Activated CD4-positive, alpha-beta memory T cell treated with anti-CD3 and anti-CD28 coated beads for 36 hours (primary cell): ENCODE measurements at regions of chr7 and their contacts with region 1.

Region 1: DNA sequence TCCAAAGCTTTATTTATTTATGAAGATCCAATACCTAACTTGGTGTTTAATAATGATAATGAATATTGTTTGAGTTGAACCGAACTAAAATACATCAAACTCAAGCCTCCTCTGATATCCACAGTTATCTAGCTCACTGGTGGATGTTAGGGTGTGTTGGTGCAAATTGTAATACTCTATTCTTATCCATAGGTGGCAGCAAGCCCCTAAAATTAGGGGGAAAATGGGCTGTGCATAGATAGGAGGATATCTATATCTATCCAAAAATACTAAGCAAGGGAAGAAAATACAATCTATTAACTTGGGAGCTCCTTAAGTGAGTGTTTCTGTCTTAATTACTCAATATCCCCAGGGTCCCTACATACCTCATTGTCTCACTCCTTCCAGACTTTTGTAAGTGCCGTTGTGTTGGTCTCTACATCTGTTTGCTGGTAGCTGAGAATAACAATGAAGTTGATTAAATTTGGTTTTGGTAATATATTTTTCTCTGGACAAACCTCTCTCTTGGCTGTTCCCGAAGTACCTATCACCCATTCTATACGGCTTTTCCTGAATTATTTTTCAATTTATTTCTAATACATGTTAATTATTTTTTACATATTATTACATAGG is 55.0 kb upstream of the VWDE start:
- DNase-seq: no peak
- H3K4me3 Mint-ChIP-seq: no peak overlapping the region
- H3K27ac Mint-ChIP-seq: no peak overlapping the region
- H3K4me1 Mint-ChIP-seq: no peaks in the 10 kb centered on the region
- H3K27me3 Mint-ChIP-seq: peaks cover 2% of the 10 kb centered on the region

Region 2: GRCh38 chr7:12031638-12032037 is 427.0 kb before region 1 on chr7:
- CTCF ChIA-PET with region 1: no interaction called
- POLR2A ChIA-PET with region 1: no interaction called
- intact Hi-C with region 1: no loop called
- DNase-seq: no peak
- H3K4me3 Mint-ChIP-seq: no peak overlapping the region
- H3K27ac Mint-ChIP-seq: no peak overlapping the region
- H3K4me1 Mint-ChIP-seq: no peaks in the 10 kb centered on the region
- H3K27me3 Mint-ChIP-seq: peaks cover 6% of the 10 kb centered on the region

Region 3: GRCh38 chr7:12067141-12067831 is 391.3 kb before region 1 on chr7:
- CTCF ChIA-PET with region 1: no interaction called
- POLR2A ChIA-PET with region 1: no interaction called
- intact Hi-C with region 1: loop called (anchors 1 kb)
- DNase-seq: peak; percentile 62
- H3K4me3 Mint-ChIP-seq: no peak overlapping the region
- H3K27ac Mint-ChIP-seq: no peak overlapping the region
- H3K4me1 Mint-ChIP-seq: peaks cover 14% of the 10 kb centered on the region
- H3K27me3 Mint-ChIP-seq: no peaks in the 10 kb centered on the region

Region 4: GRCh38 chr7:12444785-12445184 is 13.8 kb before region 1 on chr7:
- CTCF ChIA-PET with region 1: interaction called, 16 read pairs
- POLR2A ChIA-PET with region 1: no interaction called
- intact Hi-C with region 1: no loop called
- DNase-seq: no peak
- H3K4me3 Mint-ChIP-seq: no peak overlapping the region
- H3K27ac Mint-ChIP-seq: no peak overlapping the region
- H3K4me1 Mint-ChIP-seq: no peaks in the 10 kb centered on the region
- H3K27me3 Mint-ChIP-seq: no peaks in the 10 kb centered on the region

Region 5: GRCh38 chr7:12481722-12482121 is 23.1 kb after region 1 on chr7:
- CTCF ChIA-PET with region 1: interaction called, 41 read pairs
- POLR2A ChIA-PET with region 1: no interaction called
- intact Hi-C with region 1: no loop called
- DNase-seq: no peak
- H3K4me3 Mint-ChIP-seq: peak overlapping the region; percentile 40
- H3K27ac Mint-ChIP-seq: no peak overlapping the region
- H3K4me1 Mint-ChIP-seq: peaks cover 10% of the 10 kb centered on the region
- H3K27me3 Mint-ChIP-seq: no peaks in the 10 kb centered on the region

Region 6: GRCh38 chr7:12524794-12525386 is 66.3 kb after region 1 on chr7:
- CTCF ChIA-PET with region 1: interaction called, 13 read pairs
- POLR2A ChIA-PET with region 1: no interaction called
- intact Hi-C with region 1: no loop called
- DNase-seq: no peak
- H3K4me3 Mint-ChIP-seq: no peak overlapping the region
- H3K27ac Mint-ChIP-seq: no peak overlapping the region
- H3K4me1 Mint-ChIP-seq: no peaks in the 10 kb centered on the region
- H3K27me3 Mint-ChIP-seq: peaks cover 12% of the 10 kb centered on the region